ENCODE measurements at regions of chr11 and their contacts with region 1.

Region 1: GRCh38 chr11:9314291-9315036 is at the start of gene TMEM41B:
- DNase-seq: peak; percentile 98
- ATAC-seq: peak; percentile 99
- H3K4me3 ChIP-seq: peak within 1 kb of the TSS; percentile 59
- H3K27ac ChIP-seq: peak within 1 kb of the TSS; percentile 83
- H3K4me1 ChIP-seq: peaks cover 4% of the 10 kb centered on the region
- H3K27me3 ChIP-seq: no peaks in the 10 kb centered on the region
- CTCF ChIP-seq: peak; percentile 21; the same call in 1 of the 2 replicates
- POLR2A ChIP-seq: peak; percentile 82
- RAD21 ChIP-seq: peak; percentile 25; the same call in 1 of the 2 replicates
- total RNA-seq, gene TMEM41B: 20.8 and 36.7 TPM in 2 replicates

Region 2: DNA sequence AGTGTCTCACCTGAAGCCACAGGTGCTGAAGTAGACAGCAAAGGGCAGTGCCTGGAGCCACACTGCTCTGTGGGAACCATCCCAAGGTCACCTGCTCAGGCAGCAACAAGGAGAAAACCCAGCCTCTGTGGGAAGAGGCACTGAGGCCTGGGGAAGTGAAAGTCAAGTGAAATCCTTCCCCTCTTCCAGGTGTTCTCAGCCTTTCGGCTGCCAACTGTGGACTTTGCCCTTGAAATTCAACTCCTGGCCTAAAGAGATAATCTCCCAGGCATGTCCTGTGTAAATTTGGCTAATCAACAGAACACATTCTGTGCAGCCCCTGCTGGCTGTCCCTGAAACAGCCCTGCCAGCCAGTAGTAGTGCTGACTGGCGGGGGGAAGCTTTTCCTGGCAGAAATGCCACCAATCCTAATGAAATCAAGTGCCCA is 519.8 kb before region 1 on chr11:
- CTCF ChIA-PET with region 1: no interaction called
- POLR2A ChIA-PET with region 1: no interaction called
- dilution Hi-C with region 1: no loop called
- in situ Hi-C with region 1: no loop called
- intact Hi-C with region 1: no loop called
- DNase-seq: no peak
- ATAC-seq: no peak
- H3K4me3 ChIP-seq: no peak overlapping the region
- H3K27ac ChIP-seq: peak overlapping the region; percentile 3; the same call in 1 of the 2 replicates
- H3K4me1 ChIP-seq: peaks cover 19% of the 10 kb centered on the region
- H3K27me3 ChIP-seq: no peaks in the 10 kb centered on the region
- CTCF ChIP-seq: no peak
- POLR2A ChIP-seq: no peak
- RAD21 ChIP-seq: no peak

Region 3: GRCh38 chr11:9060700-9061111 is 253.8 kb before region 1 on chr11:
- CTCF ChIA-PET with region 1: no interaction called
- POLR2A ChIA-PET with region 1: no interaction called
- dilution Hi-C with region 1: no loop called
- in situ Hi-C with region 1: no loop called
- intact Hi-C with region 1: no loop called
- DNase-seq: no peak
- ATAC-seq: no peak
- H3K4me3 ChIP-seq: no peak overlapping the region
- H3K27ac ChIP-seq: no peak overlapping the region
- H3K4me1 ChIP-seq: peaks cover 2% of the 10 kb centered on the region; the same call in 1 of the 2 replicates
- H3K27me3 ChIP-seq: no peaks in the 10 kb centered on the region
- CTCF ChIP-seq: no peak
- POLR2A ChIP-seq: no peak
- RAD21 ChIP-seq: no peak

Region 4: DNA sequence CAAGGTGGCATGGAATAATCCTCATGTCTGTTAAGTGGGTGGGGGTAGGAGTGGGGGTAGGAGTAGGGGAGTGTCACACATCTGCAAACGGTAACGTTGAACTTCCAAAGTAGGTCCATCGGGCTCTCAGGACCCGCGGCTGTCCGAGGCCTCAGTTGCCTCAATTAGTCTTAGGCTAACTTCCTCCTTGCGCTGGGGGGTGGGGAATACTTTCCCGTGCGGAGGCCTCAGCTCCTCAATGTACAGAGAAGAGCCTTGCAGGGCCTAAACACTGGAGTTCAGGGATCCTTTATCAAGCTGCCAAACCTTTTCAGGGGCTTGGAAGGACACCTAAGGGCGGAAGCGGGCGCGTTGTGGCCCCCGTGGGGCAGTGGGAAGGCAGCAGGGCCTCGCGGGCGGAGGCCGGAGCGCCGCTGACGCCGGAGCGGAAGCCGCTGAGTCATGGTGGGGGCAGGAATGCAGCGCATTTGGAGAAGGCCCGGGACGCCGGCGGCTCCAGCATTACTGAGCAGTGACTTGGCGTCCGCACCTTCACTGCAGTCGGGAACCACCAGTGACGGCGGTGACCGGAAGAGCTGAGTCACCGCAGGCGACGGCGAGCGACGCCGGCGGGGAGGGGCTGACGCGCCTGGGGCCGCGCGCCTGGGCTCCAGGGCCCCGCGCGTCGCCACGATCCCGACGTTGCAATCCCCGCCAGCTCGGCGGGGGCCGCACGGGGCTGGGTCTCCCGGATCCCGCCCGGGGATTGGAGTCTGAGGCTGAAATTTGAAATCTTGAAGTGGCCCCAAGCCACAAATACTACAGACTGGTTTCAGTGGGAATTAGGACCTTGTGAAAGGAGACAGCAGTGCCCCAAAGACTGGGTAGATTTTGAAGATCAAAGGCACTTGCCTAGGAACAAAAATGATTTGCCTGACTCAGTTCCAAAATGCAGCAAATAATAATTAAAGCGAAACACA is 49.8 kb after region 1 on chr11:
- CTCF ChIA-PET with region 1: no interaction called
- POLR2A ChIA-PET with region 1: no interaction called
- dilution Hi-C with region 1: no loop called
- in situ Hi-C with region 1: no loop called
- intact Hi-C with region 1: loop called (anchors 1 kb)
- DNase-seq: peak; percentile 98
- ATAC-seq: peak; percentile 96
- H3K4me3 ChIP-seq: peak overlapping the region; percentile 38
- H3K27ac ChIP-seq: peak overlapping the region; percentile 94
- H3K4me1 ChIP-seq: peaks cover 18% of the 10 kb centered on the region
- H3K27me3 ChIP-seq: no peaks in the 10 kb centered on the region
- CTCF ChIP-seq: 0 out of 2 replicates have a peak, but pooled peaks have one; percentile 22
- POLR2A ChIP-seq: peak; percentile 72
- RAD21 ChIP-seq: peak; percentile 28; the same call in 1 of the 2 replicates

Region 5: GRCh38 chr11:9384535-9385303 is 70.3 kb after region 1 on chr11 and contains the start of gene IPO7:
- CTCF ChIA-PET with region 1: no interaction called
- POLR2A ChIA-PET with region 1: no interaction called
- dilution Hi-C with region 1: no loop called
- in situ Hi-C with region 1: no loop called
- intact Hi-C with region 1: loop called (anchors 5 kb)
- DNase-seq: peak; percentile 92
- ATAC-seq: peak; percentile 92
- H3K4me3 ChIP-seq: peak within 1 kb of the TSS; percentile 73
- H3K27ac ChIP-seq: peak within 1 kb of the TSS; percentile 80
- H3K4me1 ChIP-seq: no peaks in the 10 kb centered on the region; the same call in 1 of the 2 replicates
- H3K27me3 ChIP-seq: no peaks in the 10 kb centered on the region
- CTCF ChIP-seq: peak; percentile 47
- POLR2A ChIP-seq: peak; percentile 93
- RAD21 ChIP-seq: peak; percentile 28
- total RNA-seq, gene IPO7: 110 and 124 TPM in 2 replicates